Activated CD4-positive, alpha-beta T cell treated with anti-CD3 and anti-CD28 coated beads for 36 hours (primary cell): ENCODE measurements at regions of chr3 and their contacts with region 1.

Region 1: GRCh38 chr3:168865022-168865551 is 769.4 kb upstream of the GOLIM4 start:
- DNase-seq: peak; percentile 3
- ATAC-seq: no peak
- H3K4me3 Mint-ChIP-seq: no peak overlapping the region
- H3K27ac Mint-ChIP-seq: no peak overlapping the region
- H3K4me1 Mint-ChIP-seq: no peaks in the 10 kb centered on the region
- H3K27me3 Mint-ChIP-seq: peaks cover 3% of the 10 kb centered on the region

Region 2: DNA sequence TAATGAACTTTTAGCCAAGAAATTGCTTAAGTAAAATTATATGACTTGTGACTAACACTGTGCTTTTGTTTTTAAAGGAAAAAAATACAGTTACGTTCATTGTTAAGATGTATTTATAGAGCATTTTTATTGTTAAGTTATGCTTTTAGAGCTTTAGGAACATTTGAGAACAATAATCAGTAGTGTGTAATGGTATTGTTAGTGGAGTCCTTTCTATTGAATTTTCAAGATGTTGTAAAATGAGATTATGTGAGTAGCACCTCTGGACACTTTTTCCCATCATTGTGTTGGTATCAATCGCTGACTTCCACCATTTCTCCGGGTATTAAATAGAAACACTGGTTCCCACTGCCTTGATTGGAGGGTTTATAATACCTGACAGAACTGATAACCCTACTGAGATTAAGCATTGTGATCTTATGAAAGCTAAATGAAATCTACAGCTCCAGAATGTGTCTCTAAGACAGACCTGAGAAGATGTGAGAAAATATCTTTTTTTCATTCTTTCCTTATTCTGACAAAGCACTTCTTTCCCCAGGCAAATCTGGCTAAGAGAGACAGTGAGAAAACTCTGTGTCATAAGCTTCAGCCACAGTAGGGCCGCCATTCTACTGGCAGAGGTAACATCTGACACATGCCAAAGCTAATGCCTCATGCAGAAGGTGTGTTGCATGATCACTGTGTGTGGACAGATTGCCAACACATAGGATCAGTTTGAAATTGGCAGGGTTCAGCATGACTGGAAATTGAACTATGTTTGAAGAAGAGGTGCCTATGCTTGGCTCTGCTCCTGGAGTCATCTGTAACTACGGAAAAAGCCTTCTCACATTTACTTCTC is 187.6 kb after region 1 on chr3:
- CTCF ChIA-PET with region 1: no interaction called
- POLR2A ChIA-PET with region 1: no interaction called
- intact Hi-C with region 1: no loop called
- DNase-seq: no peak
- ATAC-seq: no peak
- H3K4me3 Mint-ChIP-seq: no peak overlapping the region
- H3K27ac Mint-ChIP-seq: no peak overlapping the region
- H3K4me1 Mint-ChIP-seq: no peaks in the 10 kb centered on the region
- H3K27me3 Mint-ChIP-seq: no peaks in the 10 kb centered on the region

Region 3: DNA sequence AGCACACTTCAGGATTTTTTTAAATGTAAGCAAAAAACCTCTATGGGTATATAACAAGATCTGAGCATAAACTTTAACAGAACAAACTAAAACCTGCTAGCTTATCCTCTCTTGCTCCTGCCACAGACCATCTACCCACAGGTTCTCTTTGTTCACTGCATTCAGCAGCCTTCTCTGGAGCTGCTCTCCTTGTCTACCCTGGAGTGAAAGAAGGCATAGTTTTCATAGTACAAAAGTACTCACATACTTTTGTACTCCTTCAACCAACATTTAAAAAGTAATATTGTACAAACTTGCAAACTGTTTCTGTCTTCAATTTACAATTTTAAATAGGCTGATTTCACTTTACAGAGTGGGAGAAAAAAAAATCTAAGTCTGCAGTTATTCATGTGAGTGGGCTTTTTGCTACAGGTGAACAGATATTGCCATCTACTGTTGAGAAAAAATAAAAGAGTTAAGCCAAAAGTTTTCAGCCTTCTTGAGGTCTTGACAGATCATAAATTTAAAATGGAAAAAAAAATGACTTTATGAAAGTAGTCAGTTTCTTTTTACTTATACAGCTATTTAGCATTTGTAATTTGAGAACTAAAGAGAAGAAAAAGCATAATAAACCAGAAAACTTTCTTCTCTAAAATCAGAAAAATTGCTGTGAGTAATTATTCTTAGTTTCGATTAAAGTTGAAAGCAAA is 879.4 kb after region 1 on chr3:
- CTCF ChIA-PET with region 1: interaction called, 3 read pairs
- POLR2A ChIA-PET with region 1: no interaction called
- intact Hi-C with region 1: loop called in 1 of 2 experiments (anchors 2 kb)
- DNase-seq: no peak
- ATAC-seq: no peak
- H3K4me3 Mint-ChIP-seq: no peak overlapping the region
- H3K27ac Mint-ChIP-seq: no peak overlapping the region
- H3K4me1 Mint-ChIP-seq: peaks cover 16% of the 10 kb centered on the region
- H3K27me3 Mint-ChIP-seq: peaks cover 16% of the 10 kb centered on the region